ENCODE measurements at regions of chr5 and their contacts with region 1.

Region 1: GRCh38 chr5:65481635-65482295 is at the start of gene ADAMTS6:
- DNase-seq: peak; percentile 90
- ATAC-seq: peak; percentile 95
- H3K4me3 Mint-ChIP-seq: no peak within 1 kb of the TSS
- H3K27ac Mint-ChIP-seq: peak within 1 kb of the TSS; percentile 91
- H3K4me1 Mint-ChIP-seq: peaks cover 10% of the 10 kb centered on the region
- H3K27me3 Mint-ChIP-seq: no peaks in the 10 kb centered on the region
- total RNA-seq, gene ADAMTS6: 0.96 to 1.3 TPM

Region 2: DNA sequence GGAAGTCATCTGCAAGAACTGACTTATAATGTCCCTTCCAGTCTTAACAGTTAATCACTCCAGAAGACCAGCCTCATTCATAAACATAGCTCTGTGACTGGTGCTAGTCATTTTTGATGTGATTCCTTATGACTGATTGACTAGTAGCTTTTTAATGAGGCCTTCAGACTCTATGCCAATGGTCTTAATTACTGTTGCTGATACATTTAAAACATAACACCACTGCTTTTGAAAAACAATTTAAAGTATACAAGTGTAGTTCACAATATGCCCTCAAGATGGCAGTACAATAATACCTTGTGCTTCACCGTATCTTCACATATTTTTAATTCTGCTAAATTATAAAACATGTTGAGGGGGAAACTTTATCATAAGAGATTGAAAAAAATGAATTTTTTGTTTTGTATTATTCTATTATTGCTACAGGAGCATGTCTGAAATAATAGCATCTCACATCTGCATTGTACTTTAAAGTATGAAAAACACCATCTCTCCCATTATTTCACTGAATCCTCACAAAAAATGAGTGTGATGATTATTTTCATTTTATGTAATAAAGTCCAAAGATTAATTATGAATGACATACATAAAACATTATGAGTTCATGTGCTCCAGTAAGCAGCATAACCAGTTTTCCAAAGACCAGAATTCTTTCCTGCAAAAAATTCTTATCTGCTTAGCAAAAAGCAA is 846.6 kb before region 1 on chr5:
- CTCF ChIA-PET with region 1: no interaction called
- POLR2A ChIA-PET with region 1: no interaction called
- intact Hi-C with region 1: loop called (anchors 1 to 2 kb)
- DNase-seq: no peak
- ATAC-seq: peak; percentile 23
- H3K4me3 Mint-ChIP-seq: no peak overlapping the region
- H3K27ac Mint-ChIP-seq: no peak overlapping the region
- H3K4me1 Mint-ChIP-seq: peaks cover 4% of the 10 kb centered on the region
- H3K27me3 Mint-ChIP-seq: peaks cover 28% of the 10 kb centered on the region

Region 3: GRCh38 chr5:64811050-64811640 is 670.6 kb before region 1 on chr5:
- CTCF ChIA-PET with region 1: interaction called, 43 read pairs
- POLR2A ChIA-PET with region 1: no interaction called
- intact Hi-C with region 1: loop called (anchors 1 kb)
- DNase-seq: peak; percentile 7
- ATAC-seq: no peak
- H3K4me3 Mint-ChIP-seq: no peak overlapping the region
- H3K27ac Mint-ChIP-seq: no peak overlapping the region
- H3K4me1 Mint-ChIP-seq: peaks cover 6% of the 10 kb centered on the region
- H3K27me3 Mint-ChIP-seq: no peaks in the 10 kb centered on the region

Region 4: DNA sequence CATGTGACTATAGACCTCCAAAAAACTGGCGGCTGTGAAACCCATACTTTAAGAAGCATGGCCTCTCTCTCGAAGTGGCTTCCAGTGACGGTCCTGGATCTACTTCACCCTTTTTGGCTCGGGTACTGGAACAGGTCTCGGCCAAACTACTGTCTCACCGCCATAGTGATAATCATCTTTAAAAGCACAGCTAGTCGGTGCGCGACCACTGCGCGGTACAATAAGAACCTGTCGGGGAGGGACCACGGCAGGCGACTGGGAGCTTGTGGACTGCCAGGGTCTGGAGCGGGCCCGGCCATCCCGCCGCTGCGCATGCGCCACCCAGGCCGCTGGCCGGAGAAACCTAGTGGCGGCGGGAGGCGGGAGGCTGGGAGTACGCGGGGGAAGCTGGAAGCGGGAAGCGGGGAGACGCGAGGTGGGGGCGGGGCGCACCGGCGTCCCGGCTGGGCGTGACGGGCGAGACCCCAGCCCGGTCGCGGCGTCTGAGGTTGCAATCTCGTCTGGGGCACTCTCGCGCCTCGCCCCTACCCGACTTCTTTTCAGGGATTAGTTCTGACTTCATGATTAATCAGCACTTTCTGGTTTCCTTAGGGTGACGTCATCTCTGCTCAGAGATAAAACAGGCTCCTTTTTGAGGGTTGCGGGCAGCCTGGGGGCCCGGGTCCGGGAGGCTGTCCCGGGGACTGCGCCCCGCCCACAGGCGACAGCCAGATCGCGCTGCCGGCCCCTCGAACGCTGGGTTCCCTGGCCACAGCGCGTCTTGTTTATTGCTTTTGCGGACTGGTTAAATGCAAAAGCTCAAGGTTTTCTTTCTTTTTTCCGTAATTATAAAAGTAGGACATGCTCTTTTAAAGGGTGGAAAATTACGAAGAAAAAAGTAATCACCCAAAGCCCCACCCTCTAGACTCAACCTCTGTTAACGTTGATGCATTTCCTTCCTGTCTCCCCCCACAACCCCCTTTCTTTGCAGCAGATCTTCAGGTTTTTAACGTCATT is 446.3 kb before region 1 on chr5:
- CTCF ChIA-PET with region 1: interaction called, 3 read pairs
- POLR2A ChIA-PET with region 1: no interaction called
- intact Hi-C with region 1: loop called (anchors 1 to 5 kb)
- DNase-seq: peak; percentile 83
- ATAC-seq: peak; percentile 94
- H3K4me3 Mint-ChIP-seq: peak overlapping the region; percentile 66
- H3K27ac Mint-ChIP-seq: peak overlapping the region; percentile 80
- H3K4me1 Mint-ChIP-seq: peaks cover 19% of the 10 kb centered on the region
- H3K27me3 Mint-ChIP-seq: no peaks in the 10 kb centered on the region

Region 5: GRCh38 chr5:65102828-65103711 is 378.7 kb before region 1 on chr5:
- CTCF ChIA-PET with region 1: interaction called, 8 read pairs
- POLR2A ChIA-PET with region 1: no interaction called
- intact Hi-C with region 1: loop called (anchors 1 kb)
- DNase-seq: peak; percentile 52
- ATAC-seq: peak; percentile 84
- H3K4me3 Mint-ChIP-seq: peak overlapping the region; percentile 66
- H3K27ac Mint-ChIP-seq: peak overlapping the region; percentile 72
- H3K4me1 Mint-ChIP-seq: peaks cover 30% of the 10 kb centered on the region
- H3K27me3 Mint-ChIP-seq: peaks cover 9% of the 10 kb centered on the region

Region 6: GRCh38 chr5:65562731-65563701 is 81.3 kb after region 1 on chr5 and contains the starts of genes CENPK and PPWD1:
- CTCF ChIA-PET with region 1: interaction called, 3 read pairs
- POLR2A ChIA-PET with region 1: no interaction called
- intact Hi-C with region 1: loop called in 1 of 2 experiments (anchors 1 kb)
- DNase-seq: peak; percentile 98
- ATAC-seq: peak; percentile 99
- H3K4me3 Mint-ChIP-seq: peak within 1 kb of the TSS; percentile 91
- H3K27ac Mint-ChIP-seq: peak within 1 kb of the TSS; percentile 98
- H3K4me1 Mint-ChIP-seq: peaks cover 47% of the 10 kb centered on the region
- H3K27me3 Mint-ChIP-seq: no peaks in the 10 kb centered on the region
- total RNA-seq, gene CENPK: 70.5 to 77.5 TPM
- total RNA-seq, gene PPWD1: 43.0 to 44.0 TPM

Region 7: DNA sequence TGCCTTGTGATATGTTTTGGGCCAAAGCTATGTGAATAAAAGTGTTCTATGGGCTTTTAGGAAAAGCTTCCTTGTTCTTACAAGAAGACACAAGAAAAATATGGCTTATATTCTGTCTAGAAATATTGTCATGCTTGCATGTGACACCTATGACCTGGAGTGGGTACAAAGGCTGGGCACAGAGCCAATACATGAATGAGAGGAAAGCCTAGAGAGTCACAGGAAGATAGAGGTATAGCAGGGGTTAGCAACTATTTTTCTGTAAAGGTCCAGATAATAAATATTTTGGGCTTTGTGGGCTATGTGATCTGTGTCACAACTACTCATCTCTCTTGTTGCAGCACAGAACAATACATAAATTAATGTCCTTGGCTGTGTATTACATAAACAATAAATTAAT is 1911.4 kb after region 1 on chr5:
- CTCF ChIA-PET with region 1: no interaction called
- POLR2A ChIA-PET with region 1: no interaction called
- intact Hi-C with region 1: no loop called
- DNase-seq: no peak
- ATAC-seq: no peak
- H3K4me3 Mint-ChIP-seq: no peak overlapping the region
- H3K27ac Mint-ChIP-seq: no peak overlapping the region
- H3K4me1 Mint-ChIP-seq: no peaks in the 10 kb centered on the region
- H3K27me3 Mint-ChIP-seq: no peaks in the 10 kb centered on the region

Measured in activated CD4-positive, alpha-beta T cell treated with anti-CD3 and anti-CD28 coated beads for 36 hours (primary cell).